ENCODE measurements at regions of chr2 and their contacts with region 1.

Region 1: DNA sequence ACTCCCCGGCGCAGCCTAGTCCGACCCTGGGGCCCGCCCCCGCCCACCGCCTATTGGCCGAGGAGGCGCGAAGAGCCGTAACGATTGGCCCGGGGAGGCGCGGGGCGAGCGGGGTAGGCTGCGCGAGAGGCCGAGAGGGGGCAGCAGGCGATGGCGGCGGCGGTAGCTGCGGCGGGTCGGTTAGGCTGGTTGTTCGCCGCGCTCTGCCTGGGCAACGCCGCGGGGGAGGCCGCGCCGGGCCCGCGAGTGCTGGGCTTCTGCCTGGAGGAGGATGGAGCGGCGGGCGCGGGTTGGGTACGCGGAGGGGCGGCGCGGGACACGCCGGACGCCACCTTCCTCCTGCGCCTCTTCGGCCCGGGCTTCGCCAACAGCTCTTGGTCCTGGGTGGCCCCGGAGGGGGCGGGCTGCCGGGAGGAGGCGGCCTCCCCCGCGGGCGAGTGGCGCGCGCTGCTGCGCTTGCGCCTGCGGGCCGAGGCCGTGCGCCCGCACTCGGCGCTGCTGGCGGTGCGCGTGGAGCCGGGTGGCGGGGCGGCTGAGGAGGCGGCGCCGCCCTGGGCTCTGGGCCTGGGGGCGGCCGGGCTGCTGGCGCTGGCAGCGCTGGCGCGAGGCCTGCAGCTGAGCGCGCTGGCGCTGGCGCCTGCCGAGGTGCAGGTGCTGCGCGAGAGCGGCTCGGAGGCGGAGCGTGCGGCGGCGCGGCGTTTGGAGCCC is at the start of gene CNNM3:
- DNase-seq: peak; percentile 95
- H3K4me3 ChIP-seq: peak within 1 kb of the TSS; percentile 52 to 82 (median 75)
- H3K27ac ChIP-seq: no peak within 1 kb of the TSS
- H3K4me1 ChIP-seq: peaks cover 13% of the 10 kb centered on the region
- H3K27me3 ChIP-seq: no peaks in the 10 kb centered on the region
- CTCF ChIP-seq: peak; percentile 45 to 76
- POLR2A ChIP-seq: peak; percentile 60
- total RNA-seq, gene CNNM3: 13.0 and 13.5 TPM in 2 replicates

Region 2: GRCh38 chr2:96536445-96537065 is 279.7 kb before region 1 on chr2 and contains the start of gene ARID5A:
- CTCF ChIA-PET with region 1: no interaction called
- POLR2A ChIA-PET with region 1: no interaction called
- dilution Hi-C with region 1: no loop called
- intact Hi-C with region 1: loop called (anchors 2 kb)
- DNase-seq: peak; percentile 88
- H3K4me3 ChIP-seq: peak within 1 kb of the TSS; percentile 38 to 77 (median 56)
- H3K27ac ChIP-seq: peak within 1 kb of the TSS; percentile 67
- H3K4me1 ChIP-seq: peaks cover 30% of the 10 kb centered on the region
- H3K27me3 ChIP-seq: no peaks in the 10 kb centered on the region
- CTCF ChIP-seq: peak in 1 of 2 donors; percentile 31
- POLR2A ChIP-seq: peak; percentile 85
- total RNA-seq, gene ARID5A: 24.7 and 29.0 TPM in 2 replicates

Region 3: DNA sequence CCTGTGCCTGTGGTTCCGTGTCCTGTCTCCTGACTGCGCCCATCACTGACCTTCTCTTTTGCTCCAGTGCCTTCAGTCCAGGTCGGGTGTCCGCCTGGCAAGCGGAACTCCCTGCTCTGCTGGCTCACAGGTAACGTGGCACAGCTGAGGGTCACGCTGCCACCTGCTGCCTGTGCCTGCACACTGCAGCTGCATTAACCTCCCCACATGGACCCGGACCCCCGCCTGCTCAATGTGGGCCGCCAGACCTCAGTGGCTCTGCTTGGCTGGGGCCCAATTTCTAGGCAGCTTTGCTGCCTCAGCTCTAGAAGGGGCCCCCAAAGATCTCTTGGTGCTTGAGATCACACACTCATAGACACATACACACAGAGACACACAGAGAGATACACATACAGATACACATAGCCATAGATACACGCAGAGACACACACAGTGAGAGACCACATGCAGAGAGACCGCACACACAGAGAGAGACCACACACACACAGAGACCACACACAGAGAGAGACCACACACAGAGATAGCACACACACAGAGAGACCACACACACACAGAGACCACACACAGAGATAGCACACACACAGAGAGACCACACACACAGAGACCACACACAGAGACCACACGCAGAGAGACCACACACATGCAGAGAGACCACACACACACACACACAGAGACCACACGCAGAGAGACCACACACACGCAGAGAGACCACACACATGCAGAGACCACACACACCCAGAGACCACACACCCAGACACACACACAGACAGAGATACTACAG is 15.1 kb before region 1 on chr2:
- CTCF ChIA-PET with region 1: interaction called, 12 read pairs
- POLR2A ChIA-PET with region 1: no interaction called
- dilution Hi-C with region 1: no loop called
- intact Hi-C with region 1: no loop called
- DNase-seq: peak; percentile 55
- H3K4me3 ChIP-seq: no peak overlapping the region
- H3K27ac ChIP-seq: no peak overlapping the region
- H3K4me1 ChIP-seq: no peaks in the 10 kb centered on the region
- H3K27me3 ChIP-seq: no peaks in the 10 kb centered on the region
- CTCF ChIP-seq: peak; percentile 79 to 90
- POLR2A ChIP-seq: no peak

Region 4: GRCh38 chr2:96960153-96960961 is 144.1 kb after region 1 on chr2:
- CTCF ChIA-PET with region 1: no interaction called
- POLR2A ChIA-PET with region 1: no interaction called
- dilution Hi-C with region 1: no loop called
- intact Hi-C with region 1: loop called (anchors 2 kb)
- DNase-seq: peak; percentile 73
- H3K4me3 ChIP-seq: no peak overlapping the region
- H3K27ac ChIP-seq: no peak overlapping the region
- H3K4me1 ChIP-seq: no peaks in the 10 kb centered on the region
- H3K27me3 ChIP-seq: no peaks in the 10 kb centered on the region
- CTCF ChIP-seq: peak; percentile 76 to 96
- POLR2A ChIP-seq: no peak

Measured in endothelial cell of umbilical vein (primary cell).